ENCODE measurements at regions of chr9 and their contacts with region 1.

Region 1: DNA sequence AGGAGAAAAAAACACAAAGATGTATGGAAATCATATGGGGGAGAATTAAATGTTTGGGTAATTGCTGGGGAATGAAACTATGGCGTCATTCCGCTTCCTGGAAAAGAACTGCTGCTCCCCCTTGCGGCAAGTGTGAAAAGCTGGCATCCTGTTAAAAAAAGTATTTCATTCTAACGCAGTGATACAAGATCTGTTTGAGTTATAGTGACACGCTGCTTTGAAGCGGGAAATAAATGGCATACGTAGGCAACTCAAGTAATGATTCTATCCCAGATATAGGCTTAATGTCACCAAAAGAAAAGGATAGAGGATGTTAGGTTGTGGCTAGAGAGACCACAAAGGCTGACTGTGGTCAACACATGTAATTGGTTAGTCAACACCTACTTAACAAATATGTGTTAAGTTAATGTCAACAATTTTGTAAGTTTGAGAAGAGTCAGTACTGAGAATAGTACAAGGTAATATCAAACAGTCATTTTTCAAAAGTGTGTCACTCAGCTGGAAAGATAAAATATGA is 70.2 kb upstream of the ALDH1A1 start:
- DNase-seq: no peak
- H3K4me3 ChIP-seq: peak overlapping the region in 1 of 4 donors; percentile 14
- H3K27ac ChIP-seq: peak overlapping the region; percentile 54 to 76 (median 75)
- H3K4me1 ChIP-seq: peaks cover 0 to 25% (median 20%) of the 10 kb centered on the region in 4 donors
- H3K27me3 ChIP-seq: no peaks in the 10 kb centered on the region
- CTCF ChIP-seq: peak; percentile 79 to 88 (median 80)
- EP300 ChIP-seq: no peak
- POLR2A ChIP-seq: no peak

Region 2: GRCh38 chr9:72856972-72857623 is 166.0 kb before region 1 on chr9:
- intact Hi-C with region 1: loop called (anchors 5 kb)
- DNase-seq: no peak
- H3K4me3 ChIP-seq: no peak overlapping the region
- H3K27ac ChIP-seq: peak overlapping the region in 1 of 4 donors; percentile 18
- H3K4me1 ChIP-seq: peaks cover 16 to 22% (median 19%) of the 10 kb centered on the region in 4 donors
- H3K27me3 ChIP-seq: no peaks in the 10 kb centered on the region
- CTCF ChIP-seq: peak; percentile 69 to 80 (median 69)
- EP300 ChIP-seq: no peak
- POLR2A ChIP-seq: no peak